Psoas muscle (tissue), 8 donors: ENCODE measurements at regions of chr1 and their contacts with region 1.

Region 1: GRCh38 chr1:86156566-86157455 is at the start of gene COL24A1:
- DNase-seq: peak; percentile 27 to 68
- ATAC-seq: peak; percentile 76 to 89 (median 85)
- H3K4me3 ChIP-seq: peak within 1 kb of the TSS; percentile 72
- H3K27ac ChIP-seq: peak within 1 kb of the TSS; percentile 81
- H3K4me1 ChIP-seq: no peaks in the 10 kb centered on the region
- H3K27me3 ChIP-seq: no peaks in the 10 kb centered on the region
- CTCF ChIP-seq: no peak
- total RNA-seq, gene COL24A1: 0.13 to 1.3 (median 0.30) TPM

Region 2: GRCh38 chr1:86247597-86248279 is 90.9 kb after region 1 on chr1:
- intact Hi-C with region 1: loop called in 1 of 2 experiments (anchors 10 kb)
- DNase-seq: peak in 1 of 2 donors; percentile 64
- ATAC-seq: peak; percentile 69 to 97 (median 86)
- H3K4me3 ChIP-seq: peak overlapping the region; percentile 48
- H3K27ac ChIP-seq: peak overlapping the region; percentile 36
- H3K4me1 ChIP-seq: no peaks in the 10 kb centered on the region
- H3K27me3 ChIP-seq: no peaks in the 10 kb centered on the region
- CTCF ChIP-seq: no peak

Region 3: GRCh38 chr1:86356247-86356646 is 199.4 kb after region 1 on chr1:
- intact Hi-C with region 1: loop called in 1 of 2 experiments (anchors 10 kb)
- DNase-seq: no peak
- ATAC-seq: no peak
- H3K4me3 ChIP-seq: no peak overlapping the region
- H3K27ac ChIP-seq: no peak overlapping the region
- H3K4me1 ChIP-seq: no peaks in the 10 kb centered on the region
- H3K27me3 ChIP-seq: no peaks in the 10 kb centered on the region
- CTCF ChIP-seq: peak; percentile 33

Region 4: GRCh38 chr1:86552366-86552765 is 395.6 kb after region 1 on chr1:
- intact Hi-C with region 1: no loop called
- DNase-seq: peak in 1 of 2 donors; percentile 46
- ATAC-seq: no peak
- H3K4me3 ChIP-seq: no peak overlapping the region
- H3K27ac ChIP-seq: no peak overlapping the region
- H3K4me1 ChIP-seq: no peaks in the 10 kb centered on the region
- H3K27me3 ChIP-seq: no peaks in the 10 kb centered on the region
- CTCF ChIP-seq: no peak